ENCODE measurements at regions of chr5 and their contacts with region 1.

Region 1: DNA sequence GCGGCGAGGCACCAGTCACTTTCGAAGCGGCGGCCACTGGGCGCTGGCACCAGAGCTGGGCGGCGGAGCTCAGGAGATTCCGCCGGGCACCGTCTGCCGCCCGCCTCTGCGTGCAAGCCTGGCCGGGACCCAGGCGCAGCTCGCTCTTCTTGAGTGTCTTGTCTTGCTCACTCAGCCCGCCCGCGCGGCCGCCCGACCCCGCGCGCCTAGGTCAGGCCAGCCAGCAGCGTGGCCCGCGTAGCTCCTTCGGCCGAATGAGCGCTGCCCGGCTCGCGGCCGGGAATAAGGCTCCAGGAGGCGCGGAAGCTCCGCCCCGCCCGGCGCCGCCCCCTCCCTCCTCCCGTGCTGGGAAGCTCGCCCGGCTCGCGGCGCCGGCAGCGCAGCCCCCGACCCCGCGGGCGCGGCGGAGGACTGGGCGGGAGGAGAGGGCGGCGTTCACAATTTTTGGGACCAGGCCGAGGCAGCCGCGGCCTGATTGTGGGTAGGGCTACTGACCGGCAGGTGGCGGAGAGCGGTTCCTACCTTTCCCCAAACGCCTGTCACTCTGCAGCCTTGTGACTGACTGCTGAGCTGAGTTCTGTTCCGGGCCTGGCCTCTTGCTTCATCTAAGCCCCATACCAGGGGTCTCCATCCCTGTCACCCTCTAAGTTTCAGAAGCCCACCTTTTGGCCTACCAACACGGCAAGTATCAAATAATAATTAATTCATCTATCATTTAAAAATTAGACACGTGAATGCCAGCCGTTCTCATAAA is at the start of gene HBEGF:
- DNase-seq: peak; percentile 84
- H3K4me3 ChIP-seq: peak within 1 kb of the TSS; percentile 69
- H3K27ac ChIP-seq: peak within 1 kb of the TSS; percentile 27
- H3K4me1 ChIP-seq: peaks cover 73% of the 10 kb centered on the region
- CTCF ChIP-seq: peak; percentile 75
- total RNA-seq, gene HBEGF: 4.7 and 5.6 TPM in 2 replicates

Region 2: GRCh38 chr5:140244525-140245025 is 102.0 kb before region 1 on chr5:
- CTCF ChIA-PET with region 1: interaction called, 99 read pairs
- POLR2A ChIA-PET with region 1: interaction called, 58 read pairs
- intact Hi-C with region 1: loop called (anchors 1 kb)
- DNase-seq: peak; percentile 89
- H3K4me3 ChIP-seq: peak overlapping the region; percentile 46
- H3K27ac ChIP-seq: peak overlapping the region; percentile 70
- H3K4me1 ChIP-seq: peaks cover 45% of the 10 kb centered on the region
- CTCF ChIP-seq: peak; percentile 87

Region 3: DNA sequence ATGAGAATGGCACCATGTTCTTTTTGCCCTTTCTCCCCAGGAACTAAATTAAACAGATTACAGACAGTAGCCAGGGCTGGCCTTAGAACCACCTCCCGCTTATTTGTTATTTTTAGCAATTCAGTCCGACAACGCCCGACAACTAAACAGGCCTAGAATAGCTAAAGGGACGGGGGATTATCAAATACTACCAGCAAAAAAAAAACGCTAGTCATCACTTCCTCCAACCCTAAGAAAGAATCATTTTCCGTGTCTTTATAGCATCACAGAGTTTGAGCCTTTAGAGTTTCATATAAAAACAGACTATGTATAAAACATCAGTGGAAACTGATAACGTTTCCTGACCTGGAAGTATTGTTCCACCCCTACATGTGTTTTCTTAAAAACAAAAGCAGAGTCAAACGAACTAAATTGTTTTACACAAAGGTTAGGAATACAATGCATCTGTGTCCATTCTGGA is 78.9 kb before region 1 on chr5:
- CTCF ChIA-PET with region 1: interaction called, 31 read pairs
- POLR2A ChIA-PET with region 1: interaction called, 25 read pairs
- intact Hi-C with region 1: loop called (anchors 1 kb)
- DNase-seq: peak; percentile 54
- H3K4me3 ChIP-seq: peak overlapping the region; percentile 56
- H3K27ac ChIP-seq: peak overlapping the region; percentile 100
- H3K4me1 ChIP-seq: peaks cover 48% of the 10 kb centered on the region
- CTCF ChIP-seq: no peak

Region 4: DNA sequence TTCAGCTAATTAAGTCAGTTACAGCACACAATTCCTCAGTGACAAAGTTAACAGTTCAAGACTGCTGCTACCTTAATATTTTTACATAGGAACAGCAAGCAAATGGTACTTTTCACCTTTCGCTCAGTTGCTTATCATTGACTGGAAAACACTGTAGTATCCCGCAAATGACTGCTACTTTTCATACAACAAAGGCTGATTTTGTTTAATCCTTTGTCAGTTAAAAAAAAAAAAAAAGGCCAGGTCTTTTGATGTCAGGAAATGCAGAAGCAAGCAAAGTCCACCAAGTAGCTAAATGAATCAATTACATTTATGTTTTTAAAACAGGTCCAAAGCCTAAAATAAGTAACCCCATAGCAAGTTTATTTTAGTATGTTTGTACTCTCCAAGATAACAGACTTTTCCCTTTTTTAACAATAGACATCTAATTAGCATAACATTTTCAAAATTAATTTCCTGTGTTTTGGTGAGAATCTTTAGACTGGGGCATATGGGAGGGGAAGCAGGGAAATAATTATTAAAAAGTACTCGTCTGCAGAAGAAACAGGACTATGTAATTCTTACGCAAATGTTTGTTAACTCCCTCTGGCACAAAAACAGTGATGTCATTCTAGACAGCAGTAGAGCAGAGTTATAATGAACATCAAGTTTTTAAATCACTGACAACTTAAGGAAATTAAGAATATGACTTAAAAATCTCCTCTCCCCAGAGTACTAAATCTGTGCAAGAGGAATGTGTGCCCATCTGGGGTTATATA is 53.3 kb before region 1 on chr5:
- CTCF ChIA-PET with region 1: interaction called, 11 read pairs
- POLR2A ChIA-PET with region 1: interaction called, 17 read pairs
- intact Hi-C with region 1: no loop called
- DNase-seq: no peak
- H3K4me3 ChIP-seq: peak overlapping the region; percentile 11
- H3K27ac ChIP-seq: peak overlapping the region; percentile 10
- H3K4me1 ChIP-seq: peaks cover 39% of the 10 kb centered on the region
- CTCF ChIP-seq: no peak

Region 5: DNA sequence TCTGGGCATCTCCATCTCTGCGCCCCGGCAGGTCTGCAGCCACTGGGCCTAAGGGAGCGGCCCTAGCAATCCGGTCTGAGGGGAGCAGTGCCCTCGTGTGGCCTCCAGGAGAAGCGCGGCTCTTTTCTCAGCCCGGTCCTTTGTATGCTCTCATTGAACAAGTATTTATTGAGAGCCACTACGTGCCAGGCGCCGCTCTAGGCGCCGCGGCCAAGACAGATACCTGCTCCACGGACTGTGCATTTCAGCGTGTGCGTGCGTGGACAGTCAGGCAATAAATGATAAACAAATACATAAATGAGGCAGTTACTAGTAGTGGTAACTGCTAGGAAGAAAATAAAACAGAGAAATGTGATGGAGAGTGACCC is 11.2 kb after region 1 on chr5:
- CTCF ChIA-PET with region 1: interaction called, 3 read pairs
- POLR2A ChIA-PET with region 1: interaction called, 11 read pairs
- intact Hi-C with region 1: no loop called
- DNase-seq: peak; percentile 80
- H3K4me3 ChIP-seq: no peak overlapping the region
- H3K27ac ChIP-seq: no peak overlapping the region
- H3K4me1 ChIP-seq: peaks cover 6% of the 10 kb centered on the region
- CTCF ChIP-seq: peak; percentile 93